ENCODE measurements at regions of chr2 and their contacts with region 1.

Region 1: GRCh38 chr2:77104546-77104945 is 417.6 kb downstream of the LRRTM4 start:
- DNase-seq: no peak
- H3K4me3 ChIP-seq: no peak overlapping the region
- H3K27ac ChIP-seq: no peak overlapping the region
- H3K4me1 ChIP-seq: peaks cover 0 to 3% (median 0%) of the 10 kb centered on the region in 4 experiments; a peak in 1 of 7 replicates
- H3K27me3 ChIP-seq: no peaks in the 10 kb centered on the region
- CTCF ChIP-seq: peak; percentile 5 to 35 (median 24)
- EP300 ChIP-seq: no peak
- POLR2A ChIP-seq: no peak
- RAD21 ChIP-seq: peak; percentile 40 to 49

Region 2: GRCh38 chr2:77064324-77064723 is 40.2 kb before region 1 on chr2:
- CTCF ChIA-PET with region 1: no interaction called
- POLR2A ChIA-PET with region 1: no interaction called
- DNase-seq: no peak
- H3K4me3 ChIP-seq: no peak overlapping the region
- H3K27ac ChIP-seq: no peak overlapping the region
- H3K4me1 ChIP-seq: no peaks in the 10 kb centered on the region; a peak in 1 of 7 replicates
- H3K27me3 ChIP-seq: no peaks in the 10 kb centered on the region
- CTCF ChIP-seq: no peak
- EP300 ChIP-seq: no peak
- POLR2A ChIP-seq: no peak
- RAD21 ChIP-seq: no peak

Region 3: DNA sequence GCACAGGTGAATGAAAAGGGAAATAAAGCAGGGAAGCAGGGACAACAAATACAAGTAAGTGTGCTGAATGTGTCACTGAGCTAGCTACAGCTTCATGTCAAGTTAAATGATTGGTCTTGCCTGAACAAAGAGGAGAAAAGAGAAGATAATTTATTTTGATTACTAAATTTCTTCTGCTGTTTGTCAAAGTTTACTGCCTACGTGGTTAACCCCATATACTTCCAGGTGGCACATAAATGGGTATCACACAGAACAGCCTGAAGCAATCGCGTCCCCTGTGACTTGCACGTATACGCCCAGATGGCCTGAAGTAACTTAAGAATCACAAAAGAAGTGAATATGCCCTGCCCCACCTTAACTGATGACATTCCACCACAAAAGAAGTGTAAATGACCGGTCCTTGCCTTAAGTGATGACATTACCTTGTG is 16.5 kb before region 1 on chr2:
- CTCF ChIA-PET with region 1: no interaction called
- POLR2A ChIA-PET with region 1: interaction called, 14 read pairs
- DNase-seq: no peak
- H3K4me3 ChIP-seq: peak overlapping the region; percentile 0 to 85 (median 74); a peak in 6 of 8 replicates
- H3K27ac ChIP-seq: peak overlapping the region; percentile 55; the same call in 1 of the 2 replicates
- H3K4me1 ChIP-seq: peaks cover 0 to 20% (median 4%) of the 10 kb centered on the region in 4 experiments; a peak in 4 of 7 replicates
- H3K27me3 ChIP-seq: no peaks in the 10 kb centered on the region
- CTCF ChIP-seq: no peak
- EP300 ChIP-seq: no peak
- POLR2A ChIP-seq: no peak; a peak in 1 of 3 replicates
- RAD21 ChIP-seq: no peak